H1 (cell line): ENCODE measurements at regions of chr10 and their contacts with region 1.

Region 1: DNA sequence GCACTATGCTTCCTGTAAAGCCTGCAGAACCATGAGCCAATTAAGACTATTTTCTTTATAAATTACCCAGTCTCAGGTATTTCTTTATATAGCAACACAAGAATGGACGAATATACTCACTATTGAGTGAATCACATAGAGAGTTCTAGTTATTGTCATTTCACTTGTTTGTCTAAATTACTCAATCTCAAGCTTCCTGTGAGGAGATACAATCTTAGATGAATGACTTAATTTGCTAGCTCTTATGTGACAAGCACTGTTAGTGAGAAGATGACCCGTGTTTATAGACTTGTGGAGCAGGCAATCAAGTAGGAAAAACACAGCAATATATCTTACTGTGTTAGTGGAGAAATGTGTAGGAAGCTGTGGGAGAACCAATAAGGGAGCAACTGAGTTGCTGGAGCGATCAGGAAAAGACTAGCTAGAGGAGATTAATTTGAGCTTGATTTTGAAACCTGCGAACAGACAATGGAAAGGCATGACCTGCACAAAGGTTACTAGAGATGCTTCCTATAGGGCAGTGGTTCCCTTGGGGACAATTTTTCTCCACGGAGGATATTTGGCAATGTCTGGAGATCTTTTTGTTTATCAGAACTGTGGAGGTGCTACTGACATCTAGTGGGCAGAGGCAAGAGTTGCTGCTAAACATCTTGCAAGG is 481.1 kb downstream of the SH2D4B start:
- DNase-seq: no peak
- H3K4me3 ChIP-seq: no peak overlapping the region
- H3K27ac ChIP-seq: no peak overlapping the region
- H3K4me1 ChIP-seq: no peaks in the 10 kb centered on the region
- H3K27me3 ChIP-seq: no peaks in the 10 kb centered on the region
- CTCF ChIP-seq: peak; percentile 49 to 91 (median 77)
- EP300 ChIP-seq: no peak
- POLR2A ChIP-seq: no peak
- RAD21 ChIP-seq: peak; percentile 79 to 82

Region 2: GRCh38 chr10:81008726-81009125 is 10.1 kb before region 1 on chr10:
- CTCF ChIA-PET with region 1: interaction called, 53 read pairs
- POLR2A ChIA-PET with region 1: no interaction called
- DNase-seq: no peak
- H3K4me3 ChIP-seq: no peak overlapping the region
- H3K27ac ChIP-seq: no peak overlapping the region
- H3K4me1 ChIP-seq: no peaks in the 10 kb centered on the region
- H3K27me3 ChIP-seq: no peaks in the 10 kb centered on the region
- CTCF ChIP-seq: no peak
- EP300 ChIP-seq: no peak
- POLR2A ChIP-seq: no peak
- RAD21 ChIP-seq: no peak